HCT116 (cell line): ENCODE measurements at regions of chr19 and their contacts with region 1.

Region 1: DNA sequence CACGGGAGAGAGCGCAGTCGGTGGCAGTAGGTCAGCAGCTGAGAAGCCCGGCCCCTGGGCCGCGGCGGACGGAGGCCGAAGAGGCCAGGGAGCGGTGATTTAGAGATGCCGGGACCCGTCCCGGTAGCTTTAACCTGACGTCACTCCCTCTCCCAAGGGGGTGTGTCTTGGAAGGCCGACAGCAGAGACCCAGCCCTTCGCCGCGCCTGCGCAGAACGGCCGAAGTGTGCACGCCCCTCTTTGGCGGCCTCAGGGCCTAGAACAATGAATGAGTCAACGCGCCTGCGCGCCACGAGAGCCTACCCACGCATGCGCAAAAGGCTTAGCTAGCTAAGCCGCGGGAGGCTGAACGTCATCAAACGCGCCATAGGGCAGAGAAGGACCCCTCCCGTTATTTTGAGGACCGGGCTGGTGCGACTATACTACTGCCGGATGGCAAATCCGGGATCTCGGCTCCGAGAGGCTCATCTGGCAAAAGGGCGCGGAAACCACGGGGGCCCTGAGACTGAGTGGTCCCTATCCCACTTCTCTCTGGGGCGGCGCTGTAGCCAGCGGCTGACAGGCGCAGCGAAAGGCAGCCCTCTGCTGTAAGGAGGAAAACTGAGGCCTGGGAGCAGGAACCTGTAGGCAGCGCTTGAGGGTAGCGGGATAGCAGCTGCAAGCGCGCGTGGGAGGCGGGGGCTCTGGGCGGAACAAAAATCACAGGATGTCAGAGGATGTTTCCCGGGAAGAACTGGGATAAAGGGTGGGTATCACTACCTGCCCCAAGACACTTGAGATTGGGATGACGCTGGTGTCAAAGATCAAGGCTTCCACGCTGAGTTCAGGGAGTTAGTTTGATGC is at the starts of genes IRGQ and ZNF576:
- DNase-seq: peak; percentile 99
- ATAC-seq: peak; percentile 86
- H3K4me3 ChIP-seq: peak within 1 kb of the TSS; percentile 71 to 92
- H3K27ac ChIP-seq: peak within 1 kb of the TSS; percentile 66
- H3K4me1 ChIP-seq: peaks cover 9 to 25% of the 10 kb centered on the region in 2 experiments; a peak in 3 of 4 replicates
- H3K27me3 ChIP-seq: no peaks in the 10 kb centered on the region
- CTCF ChIP-seq: no peak
- POLR2A ChIP-seq: peak; percentile 42
- RAD21 ChIP-seq: no peak
- total RNA-seq, gene IRGQ: 14.6 TPM
- total RNA-seq, gene ZNF576: 11.2 TPM

Region 2: GRCh38 chr19:43425567-43426392 is 170.4 kb before region 1 on chr19:
- CTCF ChIA-PET with region 1: no interaction called
- POLR2A ChIA-PET with region 1: no interaction called
- RAD21 ChIA-PET with region 1: no interaction called
- intact Hi-C with region 1: loop called (anchors 5 kb)
- DNase-seq: peak; percentile 18
- ATAC-seq: peak; percentile 86
- H3K4me3 ChIP-seq: 0 out of 4 replicates have a peak overlapping the region, but pooled peaks of 1 of the 2 experiments have one; percentile 9
- H3K27ac ChIP-seq: no peak overlapping the region
- H3K4me1 ChIP-seq: peaks cover 7 to 17% of the 10 kb centered on the region in 2 experiments
- H3K27me3 ChIP-seq: no peaks in the 10 kb centered on the region
- CTCF ChIP-seq: peak; percentile 30 to 69 (median 57); a peak in 5 of 6 replicates
- POLR2A ChIP-seq: no peak
- RAD21 ChIP-seq: peak; percentile 57; the same call in 1 of the 2 replicates

Region 3: GRCh38 chr19:43526884-43527859 is 69.0 kb before region 1 on chr19 and contains the start of gene ETHE1:
- CTCF ChIA-PET with region 1: interaction called, 14 read pairs
- POLR2A ChIA-PET with region 1: no interaction called
- RAD21 ChIA-PET with region 1: no interaction called
- intact Hi-C with region 1: loop called (anchors 2 kb)
- DNase-seq: no peak
- ATAC-seq: peak; percentile 84
- H3K4me3 ChIP-seq: peak within 1 kb of the TSS; percentile 87 to 100
- H3K27ac ChIP-seq: peak within 1 kb of the TSS; percentile 76
- H3K4me1 ChIP-seq: peaks cover 41 to 73% of the 10 kb centered on the region in 2 experiments
- H3K27me3 ChIP-seq: no peaks in the 10 kb centered on the region
- CTCF ChIP-seq: no peak
- POLR2A ChIP-seq: peak; percentile 66
- RAD21 ChIP-seq: no peak
- total RNA-seq, gene ETHE1: 64.3 TPM

Region 4: DNA sequence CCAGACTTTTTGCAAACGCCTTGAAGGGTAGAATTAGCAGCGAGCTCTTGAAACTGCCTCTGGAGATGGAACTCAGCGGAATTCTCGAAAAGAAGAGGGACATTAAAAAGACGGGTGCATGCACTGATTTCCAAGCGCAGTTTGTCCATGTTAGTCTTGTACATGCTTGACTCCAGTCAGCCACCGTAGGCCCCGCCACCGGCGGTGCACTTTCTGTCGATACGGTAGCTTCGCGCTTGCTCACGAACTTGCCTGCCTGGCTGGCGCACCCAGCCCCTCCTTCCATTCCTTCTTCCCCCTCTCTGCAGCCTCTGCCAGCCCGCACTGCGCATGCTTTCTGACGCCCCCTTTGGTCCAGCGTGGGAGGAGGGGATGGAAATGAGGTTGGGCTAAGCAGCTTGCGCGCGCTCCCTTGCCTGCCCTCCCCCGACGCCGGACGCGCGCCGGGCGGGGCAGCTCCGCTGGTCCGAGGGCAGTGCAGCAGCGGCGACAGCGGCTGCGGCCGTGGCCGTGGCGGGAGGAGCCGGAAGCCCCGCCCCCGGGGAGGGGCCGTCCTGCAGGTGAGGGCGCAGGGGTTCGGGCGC is 63.2 kb before region 1 on chr19 and contains the start of gene ZNF575:
- CTCF ChIA-PET with region 1: interaction called, 20 read pairs
- POLR2A ChIA-PET with region 1: interaction called, 3 read pairs
- RAD21 ChIA-PET with region 1: interaction called, 3 read pairs
- intact Hi-C with region 1: loop called (anchors 1 kb)
- DNase-seq: peak; percentile 87
- ATAC-seq: peak; percentile 79
- H3K4me3 ChIP-seq: peak within 1 kb of the TSS; percentile 62 to 70
- H3K27ac ChIP-seq: peak within 1 kb of the TSS; percentile 95
- H3K4me1 ChIP-seq: peaks cover 27 to 52% of the 10 kb centered on the region in 2 experiments
- H3K27me3 ChIP-seq: no peaks in the 10 kb centered on the region
- CTCF ChIP-seq: no peak
- POLR2A ChIP-seq: no peak
- RAD21 ChIP-seq: no peak
- total RNA-seq, gene ZNF575: 1.9 TPM

Region 5: GRCh38 chr19:43555185-43555770 is 40.9 kb before region 1 on chr19:
- CTCF ChIA-PET with region 1: interaction called, 20 read pairs
- POLR2A ChIA-PET with region 1: no interaction called
- RAD21 ChIA-PET with region 1: interaction called, 3 to 4 read pairs
- intact Hi-C with region 1: no loop called
- DNase-seq: no peak
- ATAC-seq: peak; percentile 92
- H3K4me3 ChIP-seq: no peak overlapping the region
- H3K27ac ChIP-seq: no peak overlapping the region
- H3K4me1 ChIP-seq: no peaks in the 10 kb centered on the region
- H3K27me3 ChIP-seq: no peaks in the 10 kb centered on the region
- CTCF ChIP-seq: peak; percentile 55 to 95 (median 88)
- POLR2A ChIP-seq: no peak
- RAD21 ChIP-seq: peak; percentile 58

Region 6: DNA sequence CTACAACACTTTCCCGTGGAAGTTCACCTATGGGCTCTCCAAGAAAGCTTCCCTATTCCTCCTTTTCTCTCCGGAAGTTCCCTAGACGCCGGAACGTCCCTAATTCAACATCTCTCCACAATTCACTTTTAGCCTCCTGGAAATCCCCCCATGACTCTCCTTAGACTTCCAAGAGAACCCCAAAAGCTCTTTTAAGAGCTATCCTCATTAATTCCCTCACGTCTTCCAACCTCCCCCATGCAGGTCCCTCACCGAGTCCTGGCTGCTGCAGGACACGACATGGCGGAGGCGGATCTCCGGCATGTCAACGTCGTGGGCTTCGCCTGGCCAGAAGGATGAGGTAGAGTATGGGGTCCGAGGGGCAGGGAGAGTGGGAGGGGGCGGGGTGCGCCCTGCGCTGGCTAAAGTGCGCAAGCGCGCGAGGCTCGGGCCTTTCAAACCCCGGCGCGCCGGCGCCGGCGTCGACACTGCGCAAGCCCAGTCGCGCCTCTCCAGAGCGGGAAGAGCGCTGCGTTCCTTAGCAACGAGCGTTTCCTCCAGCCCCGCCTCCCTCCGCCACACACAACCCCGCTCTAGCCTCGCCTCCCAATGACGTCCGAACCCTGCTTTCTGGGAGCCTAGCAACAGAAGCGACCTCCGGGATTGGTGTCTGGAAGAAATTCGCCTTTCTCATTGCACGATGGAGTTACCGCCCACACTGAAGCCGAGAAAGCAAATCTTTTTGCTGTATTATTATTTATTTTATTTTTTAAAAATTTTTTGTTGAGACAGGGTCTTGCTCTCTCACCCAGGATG is 20.9 kb before region 1 on chr19 and contains the starts of genes PINLYP and XRCC1:
- CTCF ChIA-PET with region 1: interaction called, 3 read pairs
- POLR2A ChIA-PET with region 1: interaction called, 6 read pairs
- RAD21 ChIA-PET with region 1: no interaction called
- intact Hi-C with region 1: loop called (anchors 1 kb)
- DNase-seq: peak; percentile 98
- ATAC-seq: peak; percentile 99
- H3K4me3 ChIP-seq: peak within 1 kb of the TSS; percentile 81 to 85
- H3K27ac ChIP-seq: peak within 1 kb of the TSS; percentile 70
- H3K4me1 ChIP-seq: peaks cover 11 to 14% of the 10 kb centered on the region in 2 experiments
- H3K27me3 ChIP-seq: no peaks in the 10 kb centered on the region
- CTCF ChIP-seq: no peak
- POLR2A ChIP-seq: no peak
- RAD21 ChIP-seq: no peak
- total RNA-seq, gene PINLYP: 0.17 TPM
- total RNA-seq, gene XRCC1: 37.4 TPM

Region 7: DNA sequence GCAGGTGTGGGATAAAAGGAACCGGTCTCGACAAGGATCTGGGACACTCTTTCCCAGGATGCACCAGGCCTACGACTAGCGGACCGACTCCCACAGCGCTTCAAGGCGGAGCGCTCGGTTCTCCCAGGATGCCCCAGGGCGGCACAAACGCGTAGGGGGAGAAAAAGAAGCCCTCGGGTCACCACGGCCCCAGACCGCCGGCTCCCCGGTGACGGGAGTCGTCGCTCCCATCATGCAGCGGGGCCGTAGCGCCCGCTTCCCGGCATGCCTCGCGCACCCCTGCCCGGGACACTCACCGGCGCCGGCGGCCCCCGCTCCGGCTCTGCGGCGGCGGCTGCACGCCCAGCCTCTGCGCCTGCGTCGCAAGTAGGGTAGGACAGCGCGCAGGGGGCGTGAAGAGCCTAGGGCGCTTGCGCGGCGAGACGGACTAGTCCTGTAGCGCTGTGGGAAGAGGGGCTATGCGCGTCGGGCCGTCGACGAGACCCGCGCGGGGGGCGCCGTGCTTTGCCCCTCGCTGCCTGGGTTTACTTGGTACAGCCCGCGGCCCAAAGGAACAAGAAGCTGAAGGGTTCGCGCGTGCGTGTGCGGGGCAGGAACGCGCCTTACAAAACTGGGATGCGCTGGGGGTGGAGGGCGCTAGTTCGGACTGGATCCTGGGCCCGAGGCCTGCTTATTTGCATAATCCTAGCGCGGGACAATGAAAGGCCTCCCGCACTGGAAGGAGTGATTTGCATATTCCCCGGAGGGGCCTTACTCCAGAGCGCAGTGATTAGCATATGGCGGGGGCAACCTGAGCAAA is 23.2 kb after region 1 on chr19 and contains the start of gene ZNF428:
- CTCF ChIA-PET with region 1: interaction called, 4 read pairs
- POLR2A ChIA-PET with region 1: interaction called, 4 read pairs
- RAD21 ChIA-PET with region 1: no interaction called
- intact Hi-C with region 1: loop called (anchors 1 kb)
- DNase-seq: peak; percentile 61
- ATAC-seq: peak; percentile 88
- H3K4me3 ChIP-seq: peak within 1 kb of the TSS; percentile 77 to 84
- H3K27ac ChIP-seq: peak within 1 kb of the TSS; percentile 91
- H3K4me1 ChIP-seq: peaks cover 14 to 31% of the 10 kb centered on the region in 2 experiments
- H3K27me3 ChIP-seq: no peaks in the 10 kb centered on the region
- CTCF ChIP-seq: no peak
- POLR2A ChIP-seq: peak; percentile 72
- RAD21 ChIP-seq: no peak
- total RNA-seq, gene ZNF428: 39.6 TPM